SK-N-SH (cell line): ENCODE measurements at regions of chr12 and their contacts with region 1.

Region 1: DNA sequence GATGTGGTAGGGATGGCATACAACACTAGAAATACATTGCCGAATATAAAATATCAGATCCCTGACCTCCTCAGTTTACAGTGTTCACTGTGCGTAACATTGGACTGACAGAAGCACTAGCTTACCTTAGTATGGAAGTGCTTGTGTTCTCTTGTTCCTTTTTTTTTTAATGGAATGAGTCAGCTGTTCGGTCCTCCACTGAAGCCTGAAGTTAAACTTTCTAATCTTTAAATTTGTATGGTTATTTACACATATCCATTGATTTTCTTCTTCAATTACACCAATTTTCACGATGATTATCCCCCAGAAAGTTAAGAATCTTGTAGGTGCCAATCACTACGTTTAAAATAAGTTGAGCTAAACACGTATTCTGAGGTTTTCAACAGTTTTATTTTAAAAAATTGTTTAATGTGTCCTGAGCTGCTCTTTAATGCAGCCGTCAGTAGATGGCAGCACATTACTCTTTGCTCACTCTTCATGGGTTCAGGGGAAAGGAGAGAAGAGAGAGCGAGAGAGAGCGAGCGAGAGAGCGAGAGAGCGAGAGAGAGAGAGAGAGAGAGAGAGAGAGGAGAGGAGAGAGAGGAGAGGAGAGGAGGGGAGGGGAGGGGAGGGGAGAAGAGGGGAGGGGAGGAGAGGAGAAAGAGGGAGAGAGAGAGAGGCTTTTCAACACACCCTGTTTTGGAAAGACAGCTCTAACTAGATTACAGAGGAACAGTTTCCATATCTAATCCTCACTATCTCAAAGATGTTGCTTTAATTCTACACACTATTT is 134.7 kb upstream of the SCAF11 start:
- DNase-seq: peak; percentile 39
- H3K4me3 ChIP-seq: peak overlapping the region; percentile 9 to 41; a peak in 3 of 4 replicates
- H3K27ac ChIP-seq: peak overlapping the region in 1 of 2 experiments; percentile 41; a peak in 2 of 4 replicates
- H3K4me1 ChIP-seq: no peaks in the 10 kb centered on the region; a peak in 2 of 4 replicates
- H3K27me3 ChIP-seq: no peaks in the 10 kb centered on the region
- CTCF ChIP-seq: peak; percentile 84
- EP300 ChIP-seq: no peak
- RAD21 ChIP-seq: peak; percentile 75

Region 2: GRCh38 chr12:46108721-46109120 is 16.3 kb before region 1 on chr12:
- CTCF ChIA-PET with region 1: interaction called, 33 read pairs
- POLR2A ChIA-PET with region 1: no interaction called
- DNase-seq: no peak
- H3K4me3 ChIP-seq: no peak overlapping the region
- H3K27ac ChIP-seq: no peak overlapping the region
- H3K4me1 ChIP-seq: peaks cover 0 to 6% of the 10 kb centered on the region in 2 experiments; a peak in 1 of 4 replicates
- H3K27me3 ChIP-seq: no peaks in the 10 kb centered on the region
- CTCF ChIP-seq: no peak
- EP300 ChIP-seq: no peak
- RAD21 ChIP-seq: no peak

Region 3: GRCh38 chr12:46145881-46146280 is 20.8 kb after region 1 on chr12:
- CTCF ChIA-PET with region 1: interaction called, 10 read pairs
- POLR2A ChIA-PET with region 1: no interaction called
- DNase-seq: no peak
- H3K4me3 ChIP-seq: no peak overlapping the region
- H3K27ac ChIP-seq: no peak overlapping the region
- H3K4me1 ChIP-seq: peaks cover 0 to 5% of the 10 kb centered on the region in 2 experiments; a peak in 1 of 4 replicates
- H3K27me3 ChIP-seq: no peaks in the 10 kb centered on the region
- CTCF ChIP-seq: no peak
- EP300 ChIP-seq: no peak
- RAD21 ChIP-seq: no peak

Region 4: GRCh38 chr12:46268590-46269558 is 143.8 kb after region 1 on chr12 and contains the start of gene SLC38A1:
- CTCF ChIA-PET with region 1: interaction called, 28 read pairs
- POLR2A ChIA-PET with region 1: no interaction called
- DNase-seq: peak; percentile 88
- H3K4me3 ChIP-seq: peak within 1 kb of the TSS; percentile 63 to 90
- H3K27ac ChIP-seq: peak within 1 kb of the TSS; percentile 73 to 95
- H3K4me1 ChIP-seq: peaks cover 13 to 19% of the 10 kb centered on the region in 2 experiments; a peak in 3 of 4 replicates
- H3K27me3 ChIP-seq: no peaks in the 10 kb centered on the region
- CTCF ChIP-seq: no peak
- EP300 ChIP-seq: peak in 1 of 2 experiments; percentile 29; a peak in 1 of 4 replicates
- RAD21 ChIP-seq: no peak
- polyA plus RNA-seq, gene SLC38A1: 20.7 and 27.7 TPM in 2 replicates

Region 5: GRCh38 chr12:46661110-46661845 is 536.2 kb after region 1 on chr12:
- CTCF ChIA-PET with region 1: interaction called, 15 read pairs
- POLR2A ChIA-PET with region 1: no interaction called
- DNase-seq: peak; percentile 39
- H3K4me3 ChIP-seq: no peak overlapping the region
- H3K27ac ChIP-seq: peak overlapping the region; percentile 69 to 83; a peak in 3 of 4 replicates
- H3K4me1 ChIP-seq: peaks cover 0 to 56% of the 10 kb centered on the region in 2 experiments
- H3K27me3 ChIP-seq: no peaks in the 10 kb centered on the region
- CTCF ChIP-seq: peak; percentile 81
- EP300 ChIP-seq: no peak; a peak in 1 of 4 replicates
- RAD21 ChIP-seq: peak; percentile 84